PC-3 (cell line): ENCODE measurements at regions of chr6 and their contacts with region 1.

Region 1: GRCh38 chr6:44161997-44162338 is 3.3 kb downstream of the CAPN11 start:
- DNase-seq: peak; percentile 54
- ATAC-seq: peak; percentile 44
- H3K4me3 ChIP-seq: no peak overlapping the region
- H3K27ac ChIP-seq: no peak overlapping the region
- H3K4me1 ChIP-seq: peaks cover 9% of the 10 kb centered on the region; the same call in 1 of the 2 replicates
- H3K27me3 ChIP-seq: no peaks in the 10 kb centered on the region
- CTCF ChIP-seq: no peak

Region 2: DNA sequence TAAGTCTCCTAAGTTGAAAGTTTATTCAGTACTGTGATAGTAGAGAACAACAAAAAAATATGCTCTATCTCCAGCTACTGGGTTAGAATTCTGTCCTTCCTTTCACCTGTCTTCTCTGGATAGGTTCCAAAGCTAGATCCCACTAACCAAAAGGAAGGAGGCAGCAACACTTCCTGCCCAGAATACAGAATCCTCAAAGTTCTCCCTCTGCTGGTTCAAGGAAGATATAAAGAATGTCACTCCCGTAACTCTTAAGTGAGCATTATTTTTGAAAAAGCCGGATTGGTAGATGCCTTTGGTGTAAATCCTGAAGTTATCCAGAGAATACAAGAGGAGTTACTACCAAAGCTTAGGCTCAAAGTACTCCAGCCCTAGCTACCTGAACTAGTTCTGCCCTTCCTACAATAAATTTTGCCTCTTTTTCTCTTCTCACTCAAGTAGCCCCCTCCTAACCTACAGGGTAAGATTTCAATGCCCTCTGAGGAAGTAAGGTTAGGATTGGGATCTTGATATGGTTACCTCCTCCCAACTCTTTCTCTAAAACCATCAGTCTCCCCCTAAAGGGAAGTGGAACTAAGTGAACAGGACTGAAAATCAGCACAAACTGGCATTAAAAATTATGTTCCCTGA is 827.4 kb before region 1 on chr6:
- CTCF ChIA-PET with region 1: no interaction called
- POLR2A ChIA-PET with region 1: no interaction called
- intact Hi-C with region 1: no loop called
- DNase-seq: peak; percentile 82
- ATAC-seq: peak; percentile 82
- H3K4me3 ChIP-seq: no peak overlapping the region
- H3K27ac ChIP-seq: no peak overlapping the region
- H3K4me1 ChIP-seq: no peaks in the 10 kb centered on the region
- H3K27me3 ChIP-seq: no peaks in the 10 kb centered on the region
- CTCF ChIP-seq: peak; percentile 79

Region 3: DNA sequence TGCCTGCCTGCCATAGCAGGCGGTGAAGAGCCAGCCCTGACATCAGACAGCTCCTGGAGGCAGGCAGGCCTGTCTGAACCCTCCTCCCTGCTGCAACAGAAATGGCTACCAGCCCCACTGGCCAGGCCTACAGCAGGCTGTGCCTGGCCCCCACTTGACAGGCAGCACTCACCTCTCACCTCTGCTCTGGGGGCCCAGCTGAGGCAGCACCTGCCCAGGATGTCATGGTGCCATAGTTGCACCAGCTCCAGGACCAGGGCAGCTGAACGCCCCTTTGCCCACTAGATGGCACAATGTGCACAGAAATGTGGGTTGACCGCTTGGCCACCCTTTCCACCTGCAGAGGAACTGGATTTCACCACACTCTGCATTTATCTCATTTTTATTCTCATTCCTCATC is 65.4 kb before region 1 on chr6:
- CTCF ChIA-PET with region 1: no interaction called
- POLR2A ChIA-PET with region 1: no interaction called
- intact Hi-C with region 1: no loop called
- DNase-seq: peak; percentile 89
- ATAC-seq: peak; percentile 85
- H3K4me3 ChIP-seq: no peak overlapping the region
- H3K27ac ChIP-seq: no peak overlapping the region
- H3K4me1 ChIP-seq: no peaks in the 10 kb centered on the region
- H3K27me3 ChIP-seq: no peaks in the 10 kb centered on the region
- CTCF ChIP-seq: peak; percentile 89

Region 4: GRCh38 chr6:44179072-44179536 is 17.1 kb after region 1 on chr6:
- CTCF ChIA-PET with region 1: interaction called, 11 read pairs
- POLR2A ChIA-PET with region 1: no interaction called
- intact Hi-C with region 1: no loop called
- DNase-seq: peak; percentile 40
- ATAC-seq: peak; percentile 59
- H3K4me3 ChIP-seq: no peak overlapping the region
- H3K27ac ChIP-seq: 0 out of 2 replicates have a peak overlapping the region, but pooled peaks have one; percentile 7
- H3K4me1 ChIP-seq: peaks cover 17% of the 10 kb centered on the region
- H3K27me3 ChIP-seq: no peaks in the 10 kb centered on the region
- CTCF ChIP-seq: no peak